ENCODE measurements at regions of chr6 and their contacts with region 1.

Region 1: GRCh38 chr6:70667711-70668498 is at the start of gene SMAP1:
- DNase-seq: peak; percentile 80 to 96 (median 92)
- ATAC-seq: peak; percentile 87
- H3K4me3 ChIP-seq: peak within 1 kb of the TSS; percentile 75
- H3K4me3 Mint-ChIP-seq: peak within 1 kb of the TSS; percentile 90
- H3K27ac ChIP-seq: peak within 1 kb of the TSS; percentile 54 to 66
- H3K27ac Mint-ChIP-seq: peak within 1 kb of the TSS; percentile 88
- H3K4me1 ChIP-seq: peaks cover 26% of the 10 kb centered on the region
- H3K4me1 Mint-ChIP-seq: peaks cover 57% of the 10 kb centered on the region
- H3K27me3 ChIP-seq: no peaks in the 10 kb centered on the region
- H3K27me3 Mint-ChIP-seq: no peaks in the 10 kb centered on the region
- CTCF ChIP-seq: no peak
- total RNA-seq, gene SMAP1: 20.0 to 22.5 TPM

Region 2: GRCh38 chr6:70413114-70413991 is 254.6 kb before region 1 on chr6 and contains the start of gene FAM135A:
- CTCF ChIA-PET with region 1: no interaction called
- POLR2A ChIA-PET with region 1: interaction called, 5 read pairs
- intact Hi-C with region 1: loop called (anchors 5 kb)
- DNase-seq: peak; percentile 88 to 98 (median 91)
- ATAC-seq: peak; percentile 92
- H3K4me3 ChIP-seq: peak within 1 kb of the TSS; percentile 65
- H3K4me3 Mint-ChIP-seq: peak within 1 kb of the TSS; percentile 98
- H3K27ac ChIP-seq: peak within 1 kb of the TSS; percentile 13 to 31
- H3K27ac Mint-ChIP-seq: peak within 1 kb of the TSS; percentile 91
- H3K4me1 ChIP-seq: peaks cover 10% of the 10 kb centered on the region
- H3K4me1 Mint-ChIP-seq: peaks cover 23% of the 10 kb centered on the region
- H3K27me3 ChIP-seq: no peaks in the 10 kb centered on the region
- H3K27me3 Mint-ChIP-seq: no peaks in the 10 kb centered on the region
- CTCF ChIP-seq: no peak
- total RNA-seq, gene FAM135A: 5.6 to 6.6 TPM

Region 3: DNA sequence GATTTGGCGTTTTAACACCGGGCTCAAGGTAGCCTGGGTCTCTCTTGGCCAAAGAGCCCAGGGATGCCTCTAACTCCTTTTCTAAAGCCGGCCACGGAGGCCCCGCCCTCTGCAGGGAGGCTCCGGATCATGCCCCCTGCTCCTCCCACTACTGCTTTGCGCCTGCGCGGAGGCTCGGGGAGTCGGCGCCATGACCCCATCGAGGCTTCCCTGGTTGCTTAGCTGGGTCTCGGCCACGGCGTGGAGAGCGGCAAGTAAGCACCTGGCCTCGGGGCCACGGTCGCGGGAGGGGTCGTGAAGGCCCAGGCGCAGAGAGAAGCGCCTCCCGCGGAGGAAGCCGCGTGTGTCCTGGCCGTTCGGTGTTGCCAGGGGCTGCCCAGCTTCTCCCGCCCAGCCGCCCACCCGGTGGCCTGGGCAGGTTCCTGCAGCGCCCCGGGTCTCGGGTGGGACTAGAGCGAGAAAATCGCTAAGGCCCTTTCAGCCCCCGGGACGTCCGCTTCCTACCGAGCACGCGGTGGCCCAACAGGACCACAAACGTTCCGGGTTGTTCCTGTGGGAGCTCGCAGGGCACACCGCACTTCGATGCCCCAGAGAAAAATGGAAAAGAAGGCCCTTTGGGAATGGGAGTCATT is 101.0 kb before region 1 on chr6 and contains the start of gene SDHAF4:
- CTCF ChIA-PET with region 1: no interaction called
- POLR2A ChIA-PET with region 1: interaction called, 22 read pairs
- intact Hi-C with region 1: loop called (anchors 2 to 5 kb)
- DNase-seq: peak; percentile 90 to 96 (median 93)
- ATAC-seq: peak; percentile 99
- H3K4me3 ChIP-seq: peak within 1 kb of the TSS; percentile 95
- H3K4me3 Mint-ChIP-seq: peak within 1 kb of the TSS; percentile 87
- H3K27ac ChIP-seq: peak within 1 kb of the TSS; percentile 67 to 75
- H3K27ac Mint-ChIP-seq: peak within 1 kb of the TSS; percentile 79
- H3K4me1 ChIP-seq: peaks cover 18% of the 10 kb centered on the region
- H3K4me1 Mint-ChIP-seq: peaks cover 22% of the 10 kb centered on the region
- H3K27me3 ChIP-seq: no peaks in the 10 kb centered on the region
- H3K27me3 Mint-ChIP-seq: no peaks in the 10 kb centered on the region
- CTCF ChIP-seq: no peak
- total RNA-seq, gene SDHAF4: 2.2 to 2.6 TPM

Region 4: DNA sequence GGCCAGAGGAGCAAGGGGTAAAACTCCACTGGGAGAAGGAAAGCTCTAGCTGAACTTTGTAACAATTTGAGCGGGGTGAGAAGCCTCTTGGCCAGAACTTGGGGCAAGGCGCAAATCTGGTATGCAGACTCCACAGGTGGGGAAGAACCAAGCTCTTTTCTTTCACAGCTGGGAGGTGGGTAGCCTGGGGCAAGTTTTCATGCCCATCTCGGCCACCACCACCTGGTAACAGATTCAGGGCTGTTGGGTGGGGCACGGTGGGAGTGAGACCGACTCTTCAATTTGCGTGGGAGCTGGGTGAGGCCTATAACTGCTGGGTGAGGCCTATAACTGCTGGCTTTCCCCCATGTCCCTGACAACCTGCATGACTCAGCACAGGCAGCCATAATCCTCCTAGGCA is 63.7 kb before region 1 on chr6:
- CTCF ChIA-PET with region 1: no interaction called
- POLR2A ChIA-PET with region 1: no interaction called
- intact Hi-C with region 1: no loop called
- DNase-seq: no peak
- ATAC-seq: no peak
- H3K4me3 ChIP-seq: no peak overlapping the region
- H3K4me3 Mint-ChIP-seq: no peak overlapping the region
- H3K27ac ChIP-seq: no peak overlapping the region
- H3K27ac Mint-ChIP-seq: no peak overlapping the region
- H3K4me1 ChIP-seq: peaks cover under 1% of the 10 kb centered on the region
- H3K4me1 Mint-ChIP-seq: peaks cover 7% of the 10 kb centered on the region
- H3K27me3 ChIP-seq: no peaks in the 10 kb centered on the region
- H3K27me3 Mint-ChIP-seq: no peaks in the 10 kb centered on the region
- CTCF ChIP-seq: no peak

Region 5: GRCh38 chr6:70651326-70651905 is 16.5 kb before region 1 on chr6:
- CTCF ChIA-PET with region 1: interaction called, 8 read pairs
- POLR2A ChIA-PET with region 1: interaction called, 14 read pairs
- intact Hi-C with region 1: no loop called
- DNase-seq: peak in 12 of 14 experiments; percentile 14 to 87 (median 34)
- ATAC-seq: peak; percentile 97
- H3K4me3 ChIP-seq: no peak overlapping the region
- H3K4me3 Mint-ChIP-seq: peak overlapping the region; percentile 70
- H3K27ac ChIP-seq: peak overlapping the region in 1 of 2 donors; percentile 55
- H3K27ac Mint-ChIP-seq: peak overlapping the region; percentile 64
- H3K4me1 ChIP-seq: peaks cover 23% of the 10 kb centered on the region
- H3K4me1 Mint-ChIP-seq: peaks cover 30% of the 10 kb centered on the region
- H3K27me3 ChIP-seq: no peaks in the 10 kb centered on the region
- H3K27me3 Mint-ChIP-seq: no peaks in the 10 kb centered on the region
- CTCF ChIP-seq: no peak

Region 6: DNA sequence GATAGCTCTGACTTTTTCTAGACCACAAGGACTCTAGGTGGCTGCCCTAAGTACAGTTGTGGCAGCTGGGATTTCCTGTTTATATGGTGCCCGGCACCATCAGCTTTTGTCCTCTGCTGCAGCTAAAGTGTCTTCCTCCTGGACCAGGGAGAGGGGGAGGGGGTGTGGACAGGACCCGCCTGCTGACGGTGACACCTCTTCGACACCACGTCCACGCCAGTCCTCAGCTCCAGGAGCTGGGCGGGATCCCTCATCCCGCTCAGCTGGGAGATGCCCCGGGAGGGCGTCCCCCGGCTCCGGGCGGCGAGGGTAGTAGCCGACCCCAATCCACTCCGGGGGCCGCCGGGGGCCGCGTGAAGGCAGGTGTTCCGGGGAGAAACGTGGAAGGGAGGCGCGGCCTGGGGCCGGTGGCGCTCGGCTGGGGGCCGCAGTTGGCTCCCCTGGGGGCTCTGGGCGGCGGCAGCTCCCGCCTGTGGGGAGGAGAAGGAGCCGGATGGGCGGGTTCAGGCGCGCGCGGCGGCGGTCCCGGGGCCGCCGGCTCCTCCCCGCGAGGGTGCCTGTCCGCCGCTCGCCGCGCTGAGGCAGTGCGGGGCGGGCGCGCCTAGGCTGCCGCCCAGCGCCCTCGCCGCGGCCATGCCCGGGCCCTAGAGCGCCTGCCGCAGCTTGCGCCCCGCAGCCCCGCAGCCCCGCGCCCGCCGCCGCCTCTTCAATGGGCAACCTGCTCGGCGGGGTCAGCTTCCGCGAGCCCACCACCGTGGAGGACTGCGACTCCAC is 620.5 kb after region 1 on chr6 and contains the start of gene OGFRL1:
- CTCF ChIA-PET with region 1: no interaction called
- POLR2A ChIA-PET with region 1: interaction called, 4 read pairs
- intact Hi-C with region 1: loop called in 1 of 2 experiments (anchors 10 kb)
- DNase-seq: peak; percentile 35 to 88 (median 60)
- ATAC-seq: peak; percentile 89
- H3K4me3 ChIP-seq: peak within 1 kb of the TSS; percentile 79
- H3K4me3 Mint-ChIP-seq: peak within 1 kb of the TSS; percentile 92
- H3K27ac ChIP-seq: peak within 1 kb of the TSS; percentile 61 to 76
- H3K27ac Mint-ChIP-seq: peak within 1 kb of the TSS; percentile 77
- H3K4me1 ChIP-seq: peaks cover 28% of the 10 kb centered on the region
- H3K4me1 Mint-ChIP-seq: peaks cover 42% of the 10 kb centered on the region
- H3K27me3 ChIP-seq: no peaks in the 10 kb centered on the region
- H3K27me3 Mint-ChIP-seq: no peaks in the 10 kb centered on the region
- CTCF ChIP-seq: no peak
- total RNA-seq, gene OGFRL1: 9.1 TPM

Region 7: DNA sequence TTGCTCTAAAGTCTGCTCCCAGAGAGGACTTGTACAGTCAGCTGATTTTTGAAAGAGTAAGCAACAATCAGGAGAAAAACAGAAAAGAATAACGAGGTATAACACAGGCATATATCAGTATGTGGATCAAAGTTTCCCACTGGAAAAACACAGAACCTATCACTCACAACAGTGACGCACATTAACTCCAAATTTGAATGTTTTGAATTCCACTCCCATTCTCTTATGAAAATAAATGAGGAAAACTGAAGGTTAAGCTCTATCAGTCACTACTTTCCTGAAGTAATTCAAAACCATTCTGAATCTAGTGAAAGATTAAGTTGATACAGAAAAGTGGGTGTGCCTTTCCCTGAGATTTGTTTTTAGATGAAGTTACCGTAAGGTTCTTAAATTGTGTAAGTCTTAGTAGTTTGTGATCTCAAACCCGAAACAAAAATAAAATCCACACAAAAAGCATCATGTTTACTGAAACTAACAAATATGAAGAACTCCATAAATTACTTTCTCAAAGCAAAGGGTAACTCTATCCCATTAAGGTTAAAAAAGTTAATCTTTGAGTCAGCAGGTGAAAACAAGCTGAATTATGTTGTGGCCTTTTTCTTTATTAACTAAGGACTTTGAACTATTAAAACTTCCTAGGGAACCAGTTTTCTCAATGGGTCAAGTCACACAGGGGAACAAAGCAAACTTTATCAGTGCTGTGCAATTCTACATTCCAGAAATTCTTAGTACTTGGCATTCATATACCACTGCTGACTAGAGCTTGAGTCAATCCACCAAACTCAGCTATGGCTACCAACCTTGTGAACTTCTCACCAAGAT is 736.5 kb after region 1 on chr6:
- CTCF ChIA-PET with region 1: no interaction called
- POLR2A ChIA-PET with region 1: no interaction called
- intact Hi-C with region 1: no loop called
- DNase-seq: no peak
- ATAC-seq: no peak
- H3K4me3 ChIP-seq: no peak overlapping the region
- H3K4me3 Mint-ChIP-seq: no peak overlapping the region
- H3K27ac ChIP-seq: no peak overlapping the region
- H3K27ac Mint-ChIP-seq: no peak overlapping the region
- H3K4me1 ChIP-seq: no peaks in the 10 kb centered on the region
- H3K4me1 Mint-ChIP-seq: no peaks in the 10 kb centered on the region
- H3K27me3 ChIP-seq: no peaks in the 10 kb centered on the region
- H3K27me3 Mint-ChIP-seq: peaks cover 26% of the 10 kb centered on the region
- CTCF ChIP-seq: no peak

Measured in CD4-positive, alpha-beta T cell (primary cell).